ENCODE measurements at regions of chr3 and their contacts with region 1.

Region 1: GRCh38 chr3:185498503-185499396 is at the start of gene TMEM41A:
- DNase-seq: peak; percentile 86 to 90
- ATAC-seq: peak; percentile 98 to 99 (median 98)
- H3K4me3 ChIP-seq: peak within 1 kb of the TSS; percentile 96
- H3K4me3 Mint-ChIP-seq: peak within 1 kb of the TSS; percentile 97
- H3K27ac ChIP-seq: peak within 1 kb of the TSS; percentile 71
- H3K27ac Mint-ChIP-seq: peak within 1 kb of the TSS; percentile 82 to 91
- H3K4me1 ChIP-seq: peaks cover 15% of the 10 kb centered on the region
- H3K4me1 Mint-ChIP-seq: peaks cover 17 to 21% of the 10 kb centered on the region in 2 donors
- H3K27me3 ChIP-seq: no peaks in the 10 kb centered on the region
- H3K27me3 Mint-ChIP-seq: no peaks in the 10 kb centered on the region
- CTCF ChIP-seq: no peak
- total RNA-seq, gene TMEM41A: 28.3 to 35.4 (median 35.0) TPM

Region 2: DNA sequence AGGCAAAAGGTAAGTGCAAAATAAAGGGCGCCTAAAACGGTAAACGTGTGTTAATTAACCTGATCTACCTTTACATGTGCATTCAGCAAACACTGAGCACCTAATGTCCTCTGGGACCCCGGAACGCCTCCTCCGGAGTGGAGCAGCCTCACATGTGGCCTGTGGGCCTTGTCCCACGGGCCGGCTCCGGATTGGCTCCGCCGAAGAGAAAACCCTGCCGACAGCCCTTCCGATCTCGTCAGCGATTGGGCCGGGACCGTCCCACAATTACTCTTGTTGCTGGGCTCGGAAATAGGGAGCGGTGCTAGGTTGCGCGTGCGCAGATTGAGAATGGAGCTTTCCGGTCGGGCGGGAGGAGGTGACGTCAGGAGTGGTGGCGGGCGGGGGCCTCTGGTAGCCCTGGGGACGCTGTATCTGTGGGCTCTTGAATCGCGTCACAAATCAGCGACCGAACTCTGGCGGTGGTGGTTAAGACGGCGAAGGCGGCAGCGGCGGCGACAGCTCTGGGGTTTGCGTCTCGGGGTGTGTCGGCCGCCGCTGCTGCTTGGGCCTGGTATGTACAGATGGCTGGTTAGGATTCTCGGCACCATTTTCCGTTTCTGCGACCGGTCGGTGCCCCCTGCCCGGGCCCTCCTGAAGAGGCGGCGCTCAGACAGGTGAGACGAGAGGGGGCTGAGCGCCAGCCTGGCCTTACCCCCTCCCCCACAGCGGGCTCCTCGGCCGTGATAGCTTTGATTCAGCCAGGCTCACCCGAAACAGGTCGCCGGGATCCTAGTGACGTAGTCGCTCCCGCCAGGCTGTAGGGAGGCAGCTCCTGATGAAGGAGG is 87.3 kb after region 1 on chr3 and contains the start of gene SENP2:
- intact Hi-C with region 1: loop called (anchors 1 kb)
- DNase-seq: peak; percentile 100
- ATAC-seq: peak; percentile 80 to 93 (median 85)
- H3K4me3 ChIP-seq: peak within 1 kb of the TSS; percentile 98
- H3K4me3 Mint-ChIP-seq: peak within 1 kb of the TSS; percentile 92
- H3K27ac ChIP-seq: peak within 1 kb of the TSS; percentile 99
- H3K27ac Mint-ChIP-seq: peak within 1 kb of the TSS; percentile 93 to 98
- H3K4me1 ChIP-seq: peaks cover 40% of the 10 kb centered on the region
- H3K4me1 Mint-ChIP-seq: peaks cover 47 to 50% of the 10 kb centered on the region in 2 donors
- H3K27me3 ChIP-seq: no peaks in the 10 kb centered on the region
- H3K27me3 Mint-ChIP-seq: no peaks in the 10 kb centered on the region
- CTCF ChIP-seq: no peak
- total RNA-seq, gene SENP2: 57.8 to 59.8 (median 58.7) TPM

Measured in natural killer cell (primary cell).